PC-9 (cell line): ENCODE measurements at regions of chr17 and their contacts with region 1.

Region 1: GRCh38 chr17:31052187-31052889 is 42.4 kb upstream of the NF1 start:
- DNase-seq: peak; percentile 74 to 88
- H3K4me3 ChIP-seq: peak overlapping the region; percentile 5; the same call in 1 of the 2 replicates
- H3K27ac ChIP-seq: peak overlapping the region; percentile 69
- H3K4me1 ChIP-seq: peaks cover 21% of the 10 kb centered on the region
- H3K27me3 ChIP-seq: no peaks in the 10 kb centered on the region
- CTCF ChIP-seq: no peak

Region 2: GRCh38 chr17:31071886-31072570 is 19.7 kb after region 1 on chr17:
- CTCF ChIA-PET with region 1: no interaction called
- POLR2A ChIA-PET with region 1: interaction called, 5 read pairs
- intact Hi-C with region 1: loop called (anchors 2 kb)
- DNase-seq: peak; percentile 46 to 91
- H3K4me3 ChIP-seq: no peak overlapping the region
- H3K27ac ChIP-seq: 0 out of 2 replicates have a peak overlapping the region, but pooled peaks have one; percentile 15
- H3K4me1 ChIP-seq: peaks cover 56% of the 10 kb centered on the region
- H3K27me3 ChIP-seq: no peaks in the 10 kb centered on the region
- CTCF ChIP-seq: no peak

Region 3: GRCh38 chr17:31094600-31095238 is 42.4 kb after region 1 on chr17 and contains the start of gene NF1:
- CTCF ChIA-PET with region 1: interaction called, 15 read pairs
- POLR2A ChIA-PET with region 1: no interaction called
- intact Hi-C with region 1: loop called (anchors 2 kb)
- DNase-seq: peak; percentile 83 to 94
- H3K4me3 ChIP-seq: peak within 1 kb of the TSS; percentile 98
- H3K27ac ChIP-seq: peak within 1 kb of the TSS; percentile 79
- H3K4me1 ChIP-seq: peaks cover 13% of the 10 kb centered on the region; the same call in 1 of the 2 replicates
- H3K27me3 ChIP-seq: no peaks in the 10 kb centered on the region
- CTCF ChIP-seq: no peak
- total RNA-seq, gene NF1: 61.0 and 64.0 TPM in 2 replicates

Region 4: GRCh38 chr17:32444308-32445073 is 1392.2 kb after region 1 on chr17 and contains the start of gene PSMD11:
- CTCF ChIA-PET with region 1: no interaction called
- POLR2A ChIA-PET with region 1: no interaction called
- intact Hi-C with region 1: no loop called
- DNase-seq: peak; percentile 86 to 97
- H3K4me3 ChIP-seq: peak within 1 kb of the TSS; percentile 99
- H3K27ac ChIP-seq: peak within 1 kb of the TSS; percentile 76
- H3K4me1 ChIP-seq: peaks cover 24% of the 10 kb centered on the region
- H3K27me3 ChIP-seq: no peaks in the 10 kb centered on the region
- CTCF ChIP-seq: no peak; the same call in 1 of the 2 replicates
- total RNA-seq, gene PSMD11: 145 and 149 TPM in 2 replicates